ENCODE measurements at regions of chr19 and their contacts with region 1.

Region 1: GRCh38 chr19:4968462-4969291 is at the start of gene KDM4B:
- DNase-seq: peak; percentile 99
- H3K4me3 Mint-ChIP-seq: peak within 1 kb of the TSS; percentile 83
- H3K27ac Mint-ChIP-seq: peak within 1 kb of the TSS; percentile 93
- H3K4me1 Mint-ChIP-seq: peaks cover 38% of the 10 kb centered on the region
- H3K27me3 Mint-ChIP-seq: no peaks in the 10 kb centered on the region
- CTCF ChIP-seq: no peak
- total RNA-seq, gene KDM4B: 34.4 and 36.3 TPM in 2 replicates

Region 2: DNA sequence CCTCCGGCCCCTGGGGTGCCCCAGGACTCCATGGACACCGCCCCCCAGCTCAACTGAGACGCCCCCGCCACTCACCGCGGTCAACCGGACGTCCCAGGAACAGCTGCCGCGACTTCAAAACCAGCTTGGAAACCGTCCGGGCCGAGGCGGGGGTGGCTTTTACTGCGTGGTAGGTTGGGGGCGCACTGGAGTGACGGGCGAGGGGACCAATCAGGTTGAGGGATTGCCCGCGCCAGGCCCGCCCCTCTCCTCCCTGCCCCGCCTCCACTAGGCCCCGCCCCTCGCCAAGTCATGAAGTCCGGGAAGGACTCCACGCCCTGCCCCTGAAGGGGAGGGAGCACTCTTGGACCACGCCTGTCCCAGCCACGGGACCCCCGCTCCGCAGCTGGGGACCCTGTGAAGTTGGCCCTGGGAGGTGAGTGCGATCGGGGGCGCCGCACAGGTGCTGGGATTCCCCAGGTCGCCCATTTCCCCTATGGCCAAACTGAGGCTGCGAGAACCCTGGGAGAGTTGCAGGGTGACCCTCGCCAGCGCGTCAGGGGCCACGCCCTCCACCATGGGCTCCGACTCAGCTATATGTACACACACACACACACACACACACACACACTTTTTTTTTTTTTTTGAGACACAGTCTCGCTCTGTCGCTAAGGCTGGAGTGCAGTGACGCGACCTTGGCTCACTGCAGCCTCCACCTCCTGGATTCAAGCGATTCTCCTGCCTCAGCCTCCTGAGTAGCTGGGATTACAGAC is 101.0 kb before region 1 on chr19 and contains the start of gene PLIN3:
- CTCF ChIA-PET with region 1: interaction called, 4 read pairs
- POLR2A ChIA-PET with region 1: interaction called, 18 read pairs
- intact Hi-C with region 1: no loop called
- DNase-seq: peak; percentile 97
- H3K4me3 Mint-ChIP-seq: peak within 1 kb of the TSS; percentile 80
- H3K27ac Mint-ChIP-seq: peak within 1 kb of the TSS; percentile 90
- H3K4me1 Mint-ChIP-seq: peaks cover 10% of the 10 kb centered on the region
- H3K27me3 Mint-ChIP-seq: no peaks in the 10 kb centered on the region
- CTCF ChIP-seq: no peak
- total RNA-seq, gene PLIN3: 64.3 and 71.7 TPM in 2 replicates

Region 3: GRCh38 chr19:4988770-4989251 is 20.1 kb after region 1 on chr19:
- CTCF ChIA-PET with region 1: interaction called, 3 read pairs
- POLR2A ChIA-PET with region 1: interaction called, 10 read pairs
- intact Hi-C with region 1: no loop called
- DNase-seq: no peak
- H3K4me3 Mint-ChIP-seq: no peak overlapping the region
- H3K27ac Mint-ChIP-seq: no peak overlapping the region
- H3K4me1 Mint-ChIP-seq: peaks cover 17% of the 10 kb centered on the region
- H3K27me3 Mint-ChIP-seq: no peaks in the 10 kb centered on the region
- CTCF ChIP-seq: no peak

Region 4: DNA sequence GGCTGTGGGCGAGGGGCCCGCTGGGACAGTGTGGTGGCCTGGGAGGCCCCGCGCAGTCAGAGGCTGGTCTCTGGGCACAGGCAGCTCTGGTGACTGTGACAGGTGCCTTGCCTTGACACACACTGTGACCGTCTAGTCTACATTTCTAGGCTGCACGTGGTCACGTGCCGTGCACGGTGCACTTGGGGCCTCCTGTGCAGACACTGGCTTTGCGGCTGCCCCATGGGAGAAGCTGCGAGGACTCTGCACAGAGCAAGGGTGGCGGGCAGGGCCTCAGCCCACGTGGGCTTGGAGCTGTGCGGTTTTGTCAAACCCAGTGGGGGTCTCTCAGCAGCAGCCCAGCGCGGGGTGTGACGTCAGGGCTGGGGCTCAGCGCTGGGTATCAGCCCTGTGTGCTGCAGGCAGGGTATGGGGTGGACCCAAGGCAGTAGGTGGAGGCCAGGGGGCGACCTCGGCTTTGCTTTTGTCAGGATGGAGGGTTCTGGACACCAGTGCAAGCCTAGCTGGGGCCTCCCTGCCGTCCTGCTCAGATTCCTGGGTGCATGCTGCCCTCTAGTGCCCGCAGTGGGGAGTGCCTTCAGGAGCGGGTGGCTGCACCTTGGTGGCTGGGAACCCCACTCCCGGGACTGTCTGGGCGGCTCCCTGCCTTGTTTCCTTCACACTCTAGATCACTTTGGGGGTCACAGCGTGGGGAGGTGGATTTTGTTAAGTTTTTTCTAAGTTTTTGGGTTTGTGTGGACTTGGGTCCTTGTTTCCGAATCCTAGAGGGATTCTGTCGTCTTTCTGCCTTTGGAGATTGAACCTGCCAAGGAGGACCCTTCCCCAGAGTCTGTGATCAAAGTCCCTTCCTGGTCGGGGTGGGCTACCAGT is 62.8 kb after region 1 on chr19:
- CTCF ChIA-PET with region 1: interaction called, 5 read pairs
- POLR2A ChIA-PET with region 1: interaction called, 10 read pairs
- intact Hi-C with region 1: loop called (anchors 2 kb)
- DNase-seq: peak; percentile 82
- H3K4me3 Mint-ChIP-seq: no peak overlapping the region
- H3K27ac Mint-ChIP-seq: no peak overlapping the region
- H3K4me1 Mint-ChIP-seq: no peaks in the 10 kb centered on the region
- H3K27me3 Mint-ChIP-seq: no peaks in the 10 kb centered on the region
- CTCF ChIP-seq: peak; percentile 95

Region 5: DNA sequence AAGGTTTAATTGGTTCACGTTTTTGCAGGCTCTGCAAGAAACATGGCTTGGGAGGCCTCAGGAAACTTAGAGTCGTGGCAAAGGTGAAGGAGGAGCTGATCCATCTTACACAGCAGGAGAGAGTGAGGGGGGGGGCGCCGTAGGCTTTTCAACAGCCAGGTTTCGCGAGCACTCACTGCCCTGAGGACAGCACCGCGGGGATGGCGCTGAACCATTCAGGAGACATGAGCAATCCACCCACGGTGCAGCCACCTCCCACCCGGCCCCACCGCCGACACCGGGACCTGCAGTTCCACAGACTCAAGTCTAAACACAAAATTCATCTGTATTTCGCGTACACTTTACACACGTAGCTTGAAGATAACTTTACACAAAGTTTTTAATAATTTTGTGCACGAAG is 73.9 kb after region 1 on chr19:
- CTCF ChIA-PET with region 1: no interaction called
- POLR2A ChIA-PET with region 1: no interaction called
- intact Hi-C with region 1: no loop called
- DNase-seq: no peak
- H3K4me3 Mint-ChIP-seq: no peak overlapping the region
- H3K27ac Mint-ChIP-seq: no peak overlapping the region
- H3K4me1 Mint-ChIP-seq: no peaks in the 10 kb centered on the region
- H3K27me3 Mint-ChIP-seq: no peaks in the 10 kb centered on the region
- CTCF ChIP-seq: no peak

Region 6: GRCh38 chr19:5225486-5226345 is 257.0 kb after region 1 on chr19:
- CTCF ChIA-PET with region 1: no interaction called
- POLR2A ChIA-PET with region 1: no interaction called
- intact Hi-C with region 1: no loop called
- DNase-seq: no peak
- H3K4me3 Mint-ChIP-seq: no peak overlapping the region
- H3K27ac Mint-ChIP-seq: no peak overlapping the region
- H3K4me1 Mint-ChIP-seq: no peaks in the 10 kb centered on the region
- H3K27me3 Mint-ChIP-seq: no peaks in the 10 kb centered on the region
- CTCF ChIP-seq: peak; percentile 16

Region 7: DNA sequence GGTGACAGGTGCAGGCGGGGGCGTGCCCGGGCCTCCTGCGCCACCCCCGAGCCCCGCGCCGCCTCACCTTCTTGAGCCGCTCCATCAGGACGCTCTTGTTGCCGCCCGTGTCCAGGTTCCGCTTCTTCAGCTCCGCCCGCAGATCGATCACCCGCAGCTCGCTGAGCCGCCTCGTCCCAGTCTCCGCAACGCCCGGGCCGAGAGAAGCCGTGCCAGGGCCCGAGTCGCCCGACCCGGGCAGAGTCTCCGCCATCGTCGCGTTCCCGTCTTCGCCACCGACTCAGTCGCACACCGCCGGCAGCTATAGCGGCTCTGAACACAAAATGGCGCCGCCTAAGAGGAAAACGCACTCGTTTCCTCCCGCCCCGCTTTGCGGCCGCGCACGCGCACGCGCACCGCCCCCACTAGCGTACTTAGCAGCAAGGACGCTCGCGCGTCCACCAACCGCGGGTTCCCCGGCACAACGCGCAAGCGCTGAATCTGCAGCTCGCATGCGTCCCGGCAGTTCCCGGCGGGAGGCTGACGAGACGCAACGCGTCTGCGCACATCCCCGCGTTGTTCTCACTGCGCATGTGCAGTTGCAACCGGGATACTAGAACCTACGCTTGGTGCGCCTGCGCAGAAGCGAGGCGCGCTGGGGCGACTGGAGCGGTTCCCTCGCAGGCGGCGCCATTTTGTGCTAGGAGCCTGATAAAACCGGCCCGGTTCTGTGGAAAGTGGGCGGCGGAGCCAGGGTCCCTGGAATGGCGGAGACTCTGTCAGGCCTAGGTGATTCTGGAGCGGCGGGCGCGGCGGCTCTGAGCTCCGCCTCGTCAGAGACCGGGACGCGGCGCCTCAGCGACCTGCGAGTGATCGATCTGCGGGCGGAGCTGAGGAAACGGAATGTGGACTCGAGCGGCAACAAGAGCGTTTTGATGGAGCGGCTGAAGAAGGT is 654.1 kb after region 1 on chr19 and contains the starts of genes SAFB and SAFB2:
- CTCF ChIA-PET with region 1: no interaction called
- POLR2A ChIA-PET with region 1: interaction called, 17 read pairs
- intact Hi-C with region 1: no loop called
- DNase-seq: peak; percentile 100
- H3K4me3 Mint-ChIP-seq: peak within 1 kb of the TSS; percentile 100
- H3K27ac Mint-ChIP-seq: peak within 1 kb of the TSS; percentile 100
- H3K4me1 Mint-ChIP-seq: peaks cover 41% of the 10 kb centered on the region
- H3K27me3 Mint-ChIP-seq: no peaks in the 10 kb centered on the region
- CTCF ChIP-seq: no peak
- total RNA-seq, gene SAFB: 135 and 137 TPM in 2 replicates
- total RNA-seq, gene SAFB2: 98.6 and 118 TPM in 2 replicates